Heart left ventricle (tissue), 16 donors: ENCODE measurements at regions of chr12 and their contacts with region 1.

Region 1: GRCh38 chr12:106195621-106196027 is 52.2 kb downstream of the CKAP4 start:
- DNase-seq: peak in 4 of 5 donors; percentile 18 to 62 (median 56)
- ATAC-seq: peak; percentile 44 to 80 (median 72)
- H3K4me3 ChIP-seq: no peak overlapping the region
- H3K27ac ChIP-seq: peak overlapping the region in 6 of 12 donors; percentile 3 to 31 (median 23)
- H3K4me1 ChIP-seq: peaks cover 0 to 25% (median 8%) of the 10 kb centered on the region in 12 donors
- H3K27me3 ChIP-seq: no peaks in the 10 kb centered on the region
- CTCF ChIP-seq: no peak
- POLR2A ChIP-seq: no peak

Region 2: DNA sequence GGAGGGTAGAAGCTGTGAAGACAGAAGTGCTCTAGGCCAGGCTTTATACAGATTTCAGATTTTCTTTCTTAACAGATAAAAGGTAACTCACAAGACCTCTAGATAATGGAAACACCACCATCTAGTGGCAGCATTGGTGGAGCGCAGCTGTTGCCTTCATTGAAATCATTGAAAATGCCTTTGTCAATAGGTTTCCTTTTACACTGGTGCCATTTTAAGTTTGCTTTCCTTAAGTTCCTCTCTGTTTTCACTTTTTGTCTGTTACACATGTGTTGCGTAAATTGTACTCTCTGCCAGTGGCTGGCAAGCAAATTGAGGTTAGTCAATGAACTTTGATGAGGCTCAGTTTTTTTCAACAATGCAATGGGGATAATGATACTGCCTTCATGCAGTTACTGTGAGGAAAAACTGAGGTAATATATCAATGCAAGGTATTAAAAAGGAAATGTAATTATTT is 1142.5 kb before region 1 on chr12:
- intact Hi-C with region 1: no loop called
- DNase-seq: peak in 4 of 5 donors; percentile 38 to 62 (median 50)
- ATAC-seq: peak in 3 of 4 donors; percentile 57 to 77 (median 68)
- H3K4me3 ChIP-seq: no peak overlapping the region
- H3K27ac ChIP-seq: no peak overlapping the region
- H3K4me1 ChIP-seq: no peaks in the 10 kb centered on the region
- H3K27me3 ChIP-seq: no peaks in the 10 kb centered on the region
- CTCF ChIP-seq: peak; percentile 87 to 98 (median 91)
- POLR2A ChIP-seq: no peak

Region 3: DNA sequence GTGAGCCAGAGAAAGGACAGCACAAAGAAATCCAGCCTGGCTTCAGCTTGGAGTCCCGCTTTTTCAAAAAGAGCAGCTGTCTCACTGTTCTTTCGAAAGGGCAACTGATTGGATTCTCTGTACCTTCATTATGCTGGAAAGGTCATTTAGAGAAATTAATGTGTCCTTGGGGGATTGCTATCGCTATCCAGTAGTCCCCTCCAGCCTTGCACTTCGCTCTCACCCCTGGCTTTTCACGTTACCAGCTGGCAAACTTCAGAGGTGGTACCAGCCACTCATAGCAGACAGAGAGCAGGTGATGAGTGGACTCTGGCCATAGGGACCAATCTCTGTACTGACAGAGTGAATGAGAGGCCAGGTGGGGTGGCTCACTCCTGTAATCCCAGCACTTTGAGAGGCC is 45.1 kb before region 1 on chr12:
- intact Hi-C with region 1: loop called in 2 of 10 experiments (anchors 5 kb)
- DNase-seq: no peak
- ATAC-seq: no peak
- H3K4me3 ChIP-seq: no peak overlapping the region
- H3K27ac ChIP-seq: no peak overlapping the region
- H3K4me1 ChIP-seq: peaks cover 4 to 33% (median 14%) of the 10 kb centered on the region in 12 donors
- H3K27me3 ChIP-seq: no peaks in the 10 kb centered on the region
- CTCF ChIP-seq: no peak
- POLR2A ChIP-seq: no peak

Region 4: GRCh38 chr12:106455111-106455510 is 259.5 kb after region 1 on chr12:
- intact Hi-C with region 1: no loop called
- DNase-seq: no peak
- ATAC-seq: no peak
- H3K4me3 ChIP-seq: no peak overlapping the region
- H3K27ac ChIP-seq: no peak overlapping the region
- H3K4me1 ChIP-seq: peaks cover 0 to 7% (median 0%) of the 10 kb centered on the region in 12 donors
- H3K27me3 ChIP-seq: no peaks in the 10 kb centered on the region
- CTCF ChIP-seq: no peak
- POLR2A ChIP-seq: no peak